MCF 10A (cell line): ENCODE measurements at regions of chrX and their contacts with region 1.

Region 1: DNA sequence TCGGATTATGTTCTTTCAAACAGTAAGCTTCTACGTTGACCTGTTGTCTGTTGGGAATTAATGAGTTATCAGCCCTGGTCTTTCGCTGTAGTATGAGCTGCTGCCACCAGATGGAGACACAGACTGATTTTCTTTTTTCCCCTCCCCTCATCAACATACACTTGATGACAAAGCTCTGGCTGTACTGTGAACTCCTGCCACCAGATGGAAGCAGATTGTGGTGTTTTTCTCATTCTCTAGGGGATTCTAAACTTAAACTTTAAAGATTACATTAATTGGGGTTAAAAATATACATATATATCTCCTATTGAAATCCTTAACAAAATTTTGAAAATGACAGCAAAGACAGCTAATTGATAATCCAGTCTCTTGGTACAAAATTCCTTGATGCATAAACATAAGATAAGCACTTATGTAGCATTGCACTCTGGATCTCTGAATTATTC is 44.8 kb downstream of the SMS start:
- DNase-seq: peak; percentile 85
- H3K4me3 Mint-ChIP-seq: no peak overlapping the region
- H3K27ac Mint-ChIP-seq: no peak overlapping the region
- H3K4me1 Mint-ChIP-seq: no peaks in the 10 kb centered on the region
- H3K27me3 Mint-ChIP-seq: peaks cover 62% of the 10 kb centered on the region
- CTCF ChIP-seq: peak; percentile 92

Region 2: GRCh38 chrX:21905269-21905668 is 80.1 kb before region 1 on chrX:
- CTCF ChIA-PET with region 1: no interaction called
- POLR2A ChIA-PET with region 1: no interaction called
- intact Hi-C with region 1: no loop called
- DNase-seq: no peak
- H3K4me3 Mint-ChIP-seq: no peak overlapping the region
- H3K27ac Mint-ChIP-seq: no peak overlapping the region
- H3K4me1 Mint-ChIP-seq: no peaks in the 10 kb centered on the region
- H3K27me3 Mint-ChIP-seq: peaks cover 58% of the 10 kb centered on the region
- CTCF ChIP-seq: no peak

Region 3: GRCh38 chrX:22004866-22005265 is 19.5 kb after region 1 on chrX:
- CTCF ChIA-PET with region 1: interaction called, 11 read pairs
- POLR2A ChIA-PET with region 1: no interaction called
- intact Hi-C with region 1: no loop called
- DNase-seq: no peak
- H3K4me3 Mint-ChIP-seq: no peak overlapping the region
- H3K27ac Mint-ChIP-seq: no peak overlapping the region
- H3K4me1 Mint-ChIP-seq: no peaks in the 10 kb centered on the region
- H3K27me3 Mint-ChIP-seq: peaks cover 76% of the 10 kb centered on the region
- CTCF ChIP-seq: no peak

Region 4: GRCh38 chrX:22351966-22352365 is 366.6 kb after region 1 on chrX:
- CTCF ChIA-PET with region 1: no interaction called
- POLR2A ChIA-PET with region 1: no interaction called
- intact Hi-C with region 1: loop called (anchors 10 kb)
- DNase-seq: peak; percentile 18
- H3K4me3 Mint-ChIP-seq: no peak overlapping the region
- H3K27ac Mint-ChIP-seq: no peak overlapping the region
- H3K4me1 Mint-ChIP-seq: peaks cover 5% of the 10 kb centered on the region
- H3K27me3 Mint-ChIP-seq: peaks cover 87% of the 10 kb centered on the region
- CTCF ChIP-seq: no peak

Region 5: DNA sequence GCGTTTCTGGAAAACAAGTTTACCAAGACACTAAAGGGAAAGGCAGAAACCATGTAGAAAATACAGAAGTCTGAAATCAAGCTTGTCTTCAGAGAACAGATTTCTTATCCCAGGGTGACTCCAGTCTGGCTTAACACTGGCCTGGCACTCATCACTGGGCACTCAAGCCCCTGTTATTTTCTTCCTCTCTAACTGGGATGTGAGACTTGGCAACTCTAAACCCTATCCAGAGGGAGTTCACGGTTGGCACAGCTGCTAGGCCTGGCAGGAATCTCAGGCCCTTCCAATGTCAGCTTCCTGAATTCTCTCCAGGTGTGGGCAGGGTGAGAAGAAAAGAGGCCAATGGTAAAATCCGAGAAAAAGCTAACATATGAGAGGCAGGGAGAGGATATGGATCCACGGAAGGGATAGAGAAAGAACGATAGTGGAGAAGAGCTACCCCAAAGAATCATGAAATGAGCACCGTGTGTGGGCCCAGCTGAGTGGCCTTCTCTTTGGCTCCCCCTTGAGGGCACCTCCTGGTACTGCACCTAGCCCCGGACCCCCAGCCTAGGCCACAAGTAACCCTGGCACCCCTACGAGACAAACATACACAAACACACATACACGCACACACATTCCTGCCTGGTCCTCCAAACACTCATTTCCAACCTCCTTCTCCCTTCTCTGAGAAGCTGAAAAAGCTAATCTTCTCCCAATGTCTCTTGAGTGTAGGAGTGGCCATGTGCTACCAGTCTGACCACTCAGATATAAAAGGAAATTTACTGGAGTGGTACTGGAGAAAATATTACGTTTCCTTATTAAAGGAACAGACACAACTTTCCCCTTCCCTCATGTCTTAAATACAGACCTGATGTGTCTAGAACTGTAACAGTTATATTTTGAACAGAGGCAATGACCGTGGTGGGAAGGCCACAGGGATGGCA is 1332.7 kb after region 1 on chrX:
- CTCF ChIA-PET with region 1: interaction called, 7 read pairs
- POLR2A ChIA-PET with region 1: no interaction called
- intact Hi-C with region 1: loop called (anchors 1 kb)
- DNase-seq: peak; percentile 44
- H3K4me3 Mint-ChIP-seq: no peak overlapping the region
- H3K27ac Mint-ChIP-seq: no peak overlapping the region
- H3K4me1 Mint-ChIP-seq: no peaks in the 10 kb centered on the region
- H3K27me3 Mint-ChIP-seq: peaks cover 70% of the 10 kb centered on the region
- CTCF ChIP-seq: peak; percentile 94

Region 6: DNA sequence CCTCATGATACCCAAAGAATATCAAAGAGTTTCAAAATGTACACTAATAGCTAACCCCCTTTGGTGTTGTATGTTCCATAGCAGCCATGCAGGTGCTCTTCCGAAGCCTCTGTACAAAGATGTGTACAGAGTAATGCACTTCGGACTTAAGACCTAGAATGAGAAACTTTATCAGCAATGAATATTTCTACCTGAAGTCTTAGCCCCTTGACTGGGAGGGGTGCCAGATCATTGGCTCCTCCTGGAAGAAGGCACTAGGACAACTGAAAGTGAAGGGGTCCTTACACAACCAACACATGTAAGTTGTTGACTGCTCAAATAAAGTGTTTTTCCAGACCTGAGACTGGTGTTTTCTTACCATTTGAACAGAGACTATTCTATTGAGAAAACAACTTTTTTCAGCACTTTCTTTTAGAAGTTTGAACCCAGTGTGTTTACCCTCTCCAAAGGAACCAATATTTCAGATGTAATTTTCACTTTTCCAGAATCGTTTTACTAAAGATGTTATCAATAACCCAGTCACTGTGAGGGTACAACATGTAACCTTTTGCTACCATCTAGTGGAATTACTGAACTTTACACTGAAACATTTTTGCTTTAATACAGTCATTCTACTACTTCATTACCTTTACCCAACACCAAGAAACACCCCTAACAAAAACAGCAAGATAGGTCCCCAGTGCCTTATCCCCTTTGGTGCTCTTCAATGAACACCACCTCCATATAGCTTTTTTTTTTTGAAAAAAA is 1648.7 kb after region 1 on chrX:
- CTCF ChIA-PET with region 1: interaction called, 11 read pairs
- POLR2A ChIA-PET with region 1: no interaction called
- intact Hi-C with region 1: loop called (anchors 1 kb)
- DNase-seq: peak; percentile 15
- H3K4me3 Mint-ChIP-seq: no peak overlapping the region
- H3K27ac Mint-ChIP-seq: no peak overlapping the region
- H3K4me1 Mint-ChIP-seq: no peaks in the 10 kb centered on the region
- H3K27me3 Mint-ChIP-seq: peaks cover 55% of the 10 kb centered on the region
- CTCF ChIP-seq: peak; percentile 35